ENCODE measurements at regions of chr9 and their contacts with region 1.

Region 1: DNA sequence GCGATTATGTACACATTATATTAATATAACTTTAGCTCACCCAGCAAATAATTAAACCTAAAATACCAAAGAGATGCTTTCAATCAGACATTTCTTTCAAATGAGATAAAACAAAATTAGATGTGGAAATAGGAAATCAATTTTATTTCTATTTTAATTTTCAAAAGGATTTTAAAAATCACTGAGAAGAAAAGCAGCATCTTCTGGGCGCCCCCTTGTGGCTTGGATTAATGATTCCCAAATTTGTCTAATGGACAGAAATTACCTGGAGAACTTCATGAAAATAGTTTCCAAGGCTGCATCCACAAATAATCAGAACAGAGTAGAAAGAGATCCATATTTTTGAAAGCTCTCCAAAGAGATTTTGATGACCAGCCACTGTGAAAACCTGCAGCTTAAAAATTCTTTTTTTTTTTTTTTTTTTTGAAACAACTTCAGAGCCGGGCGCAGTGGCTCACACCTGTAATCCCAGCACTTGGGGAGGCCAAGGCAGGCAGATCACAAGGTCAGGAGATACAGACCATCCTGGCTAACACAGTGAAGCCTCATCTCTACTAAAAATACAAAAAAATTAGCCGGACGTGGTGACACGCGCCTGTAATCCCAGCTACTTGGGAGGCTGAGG is 50.9 kb upstream of the CEMIP2 start:
- DNase-seq: no peak
- H3K4me3 ChIP-seq: no peak overlapping the region
- H3K27me3 ChIP-seq: no peaks in the 10 kb centered on the region
- CTCF ChIP-seq: peak; percentile 69

Region 2: DNA sequence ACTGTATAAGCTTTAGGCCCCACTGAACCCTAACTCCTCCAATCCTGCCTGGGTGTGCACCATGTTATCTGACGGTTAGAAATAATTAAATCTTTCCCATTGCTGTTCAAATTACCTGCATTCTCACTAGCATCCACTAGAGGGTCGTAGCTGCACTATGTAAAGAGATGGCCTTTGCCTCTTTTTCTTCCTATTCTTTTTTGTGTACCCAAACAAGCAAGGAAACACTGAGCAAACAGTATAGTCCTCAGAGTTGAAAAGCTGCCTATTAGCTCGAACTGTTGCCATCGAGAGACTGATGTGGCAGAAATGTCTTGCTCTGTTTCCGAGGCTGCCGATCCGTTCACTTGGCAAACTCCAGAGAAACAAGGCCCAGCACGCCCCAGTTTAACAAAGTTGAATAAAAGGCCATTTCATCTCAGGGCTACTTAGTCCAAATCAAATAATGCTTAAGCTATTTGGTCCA is 534.0 kb before region 1 on chr9:
- CTCF ChIA-PET with region 1: interaction called, 10 read pairs
- POLR2A ChIA-PET with region 1: no interaction called
- DNase-seq: no peak
- H3K4me3 ChIP-seq: no peak overlapping the region
- H3K27me3 ChIP-seq: peaks cover 3% of the 10 kb centered on the region; the same call in 1 of the 2 replicates
- CTCF ChIP-seq: peak; percentile 84

Region 3: DNA sequence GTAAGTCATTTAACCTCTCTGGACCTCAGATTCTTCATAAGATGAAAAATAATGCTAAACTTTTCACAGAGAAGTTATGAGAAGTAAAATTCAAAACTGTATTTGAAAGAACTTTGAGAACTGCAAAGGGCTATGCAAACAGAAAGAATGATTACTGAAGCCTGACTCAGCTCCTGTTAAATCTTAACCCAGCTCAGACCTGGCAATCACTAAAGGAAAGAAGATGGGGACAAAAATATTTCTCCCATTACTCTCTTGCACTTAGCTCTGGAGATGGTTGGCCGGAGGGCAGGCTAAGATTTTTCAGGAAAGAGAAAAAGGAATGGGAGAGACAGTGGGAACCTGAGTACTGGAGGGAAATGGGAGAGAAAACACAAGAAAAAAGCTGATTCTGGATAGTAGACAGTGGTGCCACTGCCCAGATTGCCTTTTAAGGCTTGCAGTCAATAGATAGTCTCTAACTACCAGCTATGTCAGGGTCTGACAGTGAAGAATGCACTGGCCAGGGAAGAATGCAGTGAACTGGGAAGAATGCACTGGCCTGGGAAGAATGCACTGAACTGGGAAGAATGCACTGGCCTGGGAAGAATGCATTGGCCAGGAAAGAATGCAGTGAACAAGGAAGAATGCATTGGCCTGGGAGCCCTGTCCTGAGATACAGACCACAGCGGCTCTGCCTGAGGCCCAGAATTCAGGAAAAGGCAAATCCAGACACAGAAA is 25.7 kb before region 1 on chr9:
- CTCF ChIA-PET with region 1: interaction called, 17 read pairs
- POLR2A ChIA-PET with region 1: no interaction called
- DNase-seq: peak; percentile 13
- H3K4me3 ChIP-seq: no peak overlapping the region
- H3K27me3 ChIP-seq: no peaks in the 10 kb centered on the region
- CTCF ChIP-seq: no peak

Region 4: DNA sequence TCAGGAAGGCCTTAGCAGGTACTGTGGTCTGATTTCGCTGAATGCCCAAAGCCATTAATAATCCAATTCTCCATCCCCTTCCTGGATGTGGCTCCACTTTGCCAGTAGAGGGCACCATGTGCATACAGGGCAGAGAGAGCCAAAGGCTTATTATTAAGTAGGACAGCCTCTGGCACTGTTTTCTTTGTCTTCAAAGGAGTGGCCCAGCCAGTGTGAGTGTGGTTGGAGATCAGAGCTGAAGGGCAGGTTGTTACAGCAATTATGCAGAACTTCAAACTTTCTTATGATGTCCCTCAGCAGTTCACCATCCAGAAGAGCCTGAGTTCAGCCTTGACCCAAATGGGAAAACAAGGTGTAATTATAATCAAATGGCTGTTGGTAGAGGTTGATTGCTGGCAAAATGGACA is 12.3 kb before region 1 on chr9:
- CTCF ChIA-PET with region 1: interaction called, 65 read pairs
- POLR2A ChIA-PET with region 1: no interaction called
- DNase-seq: no peak
- H3K4me3 ChIP-seq: no peak overlapping the region
- H3K27me3 ChIP-seq: no peaks in the 10 kb centered on the region
- CTCF ChIP-seq: peak; percentile 91

Region 5: GRCh38 chr9:71830929-71831328 is 11.7 kb after region 1 on chr9:
- CTCF ChIA-PET with region 1: interaction called, 37 read pairs
- POLR2A ChIA-PET with region 1: no interaction called
- DNase-seq: peak; percentile 47
- H3K4me3 ChIP-seq: no peak overlapping the region
- H3K27me3 ChIP-seq: no peaks in the 10 kb centered on the region
- CTCF ChIP-seq: no peak

Region 6: GRCh38 chr9:72022841-72023240 is 203.6 kb after region 1 on chr9:
- CTCF ChIA-PET with region 1: interaction called, 34 read pairs
- POLR2A ChIA-PET with region 1: no interaction called
- DNase-seq: peak; percentile 47
- H3K4me3 ChIP-seq: no peak overlapping the region
- H3K27me3 ChIP-seq: no peaks in the 10 kb centered on the region
- CTCF ChIP-seq: no peak